IMR-90 (cell line): ENCODE measurements at regions of chr6 and their contacts with region 1.

Region 1: DNA sequence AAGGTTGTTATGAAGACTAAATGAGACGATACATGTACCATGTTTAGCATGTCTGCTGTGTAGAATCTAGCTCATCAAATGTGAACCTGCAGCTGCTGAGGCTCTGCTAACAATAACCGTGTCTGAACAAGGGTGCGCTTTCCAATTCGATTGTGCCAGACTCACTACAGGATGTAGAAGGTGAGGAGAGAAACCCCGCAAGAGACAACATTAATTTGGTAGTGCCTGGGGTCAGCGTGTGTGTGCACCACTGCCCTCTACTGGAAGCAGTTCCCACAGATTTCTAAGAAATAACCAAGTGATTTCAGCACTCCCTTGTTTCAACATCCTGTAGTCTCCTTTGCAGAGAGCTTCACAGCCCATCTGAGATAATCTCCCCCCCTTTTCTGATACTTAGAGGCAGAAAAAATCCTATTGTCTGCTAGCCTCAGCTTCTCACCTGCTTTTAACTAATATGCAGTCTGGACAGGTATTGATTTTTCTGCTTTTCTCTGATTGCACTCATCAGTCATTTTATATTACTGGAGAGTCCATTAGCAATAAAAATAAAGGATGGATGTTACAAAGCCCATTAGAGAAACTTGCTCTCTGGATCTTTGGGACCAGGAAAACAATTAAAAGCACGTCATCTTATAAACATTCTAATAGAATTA is 96.7 kb upstream of the BACH2 start:
- DNase-seq: peak; percentile 71
- ATAC-seq: peak; percentile 93
- H3K4me3 ChIP-seq: no peak overlapping the region
- H3K27ac ChIP-seq: no peak overlapping the region
- H3K4me1 ChIP-seq: no peaks in the 10 kb centered on the region
- H3K27me3 ChIP-seq: peaks cover 20% of the 10 kb centered on the region
- CTCF ChIP-seq: peak; percentile 81
- POLR2A ChIP-seq: no peak
- RAD21 ChIP-seq: peak; percentile 91

Region 2: DNA sequence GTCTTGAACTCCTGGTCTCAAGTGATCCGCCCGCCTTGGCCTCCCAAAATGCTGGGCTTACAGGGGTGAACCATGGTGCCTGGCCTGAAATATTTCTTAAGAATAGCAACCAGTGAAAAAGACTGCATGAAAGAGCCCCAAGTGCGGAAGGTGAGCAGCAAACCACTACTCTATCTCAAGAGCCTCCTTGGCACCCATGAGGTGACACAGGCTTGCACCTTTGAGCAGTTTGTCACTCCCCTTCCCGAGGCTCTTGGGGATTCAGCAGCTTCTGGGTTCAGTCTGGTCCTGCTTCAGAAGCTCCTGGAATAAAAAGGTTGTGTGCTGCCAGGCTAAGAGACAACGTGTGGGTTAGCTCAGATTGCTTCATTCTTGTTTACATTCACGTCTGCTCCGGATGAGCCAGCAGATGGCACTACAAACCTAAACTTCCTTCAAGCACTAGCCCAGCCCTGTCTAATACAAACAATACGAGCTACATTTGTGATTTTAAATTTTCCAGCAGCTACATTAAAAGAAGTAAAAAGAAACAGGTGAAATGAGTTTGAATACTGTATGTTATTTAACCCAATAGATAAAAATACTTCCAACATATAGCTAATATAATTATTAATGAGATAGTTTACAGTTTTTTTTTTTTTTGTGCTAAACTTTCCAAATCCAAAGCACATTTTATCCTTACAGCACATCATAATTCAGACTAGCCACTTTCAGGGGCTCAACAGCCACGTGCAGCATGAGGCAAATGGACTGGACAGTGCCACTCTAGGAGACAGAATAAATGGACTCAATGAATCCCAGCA is 452.9 kb before region 1 on chr6:
- CTCF ChIA-PET with region 1: interaction called, 12 read pairs
- POLR2A ChIA-PET with region 1: no interaction called
- dilution Hi-C with region 1: no loop called
- in situ Hi-C with region 1: no loop called
- intact Hi-C with region 1: loop called (anchors 1 kb)
- DNase-seq: peak; percentile 86
- ATAC-seq: peak; percentile 99
- H3K4me3 ChIP-seq: no peak overlapping the region
- H3K27ac ChIP-seq: no peak overlapping the region
- H3K4me1 ChIP-seq: no peaks in the 10 kb centered on the region; the same call in 1 of the 2 replicates
- H3K27me3 ChIP-seq: no peaks in the 10 kb centered on the region
- CTCF ChIP-seq: peak; percentile 92
- POLR2A ChIP-seq: no peak
- RAD21 ChIP-seq: peak; percentile 97

Region 3: GRCh38 chr6:90179190-90180169 is 213.9 kb before region 1 on chr6:
- CTCF ChIA-PET with region 1: no interaction called
- POLR2A ChIA-PET with region 1: no interaction called
- dilution Hi-C with region 1: no loop called
- in situ Hi-C with region 1: no loop called
- intact Hi-C with region 1: no loop called
- DNase-seq: no peak
- ATAC-seq: no peak
- H3K4me3 ChIP-seq: no peak overlapping the region
- H3K27ac ChIP-seq: no peak overlapping the region
- H3K4me1 ChIP-seq: peaks cover 10% of the 10 kb centered on the region
- H3K27me3 ChIP-seq: no peaks in the 10 kb centered on the region; the same call in none of the 2 replicates
- CTCF ChIP-seq: peak; percentile 43
- POLR2A ChIP-seq: no peak
- RAD21 ChIP-seq: peak; percentile 27; the same call in 1 of the 2 replicates